CD4-positive, alpha-beta T cell (primary cell): ENCODE measurements at regions of chr12 and their contacts with region 1.

Region 1: DNA sequence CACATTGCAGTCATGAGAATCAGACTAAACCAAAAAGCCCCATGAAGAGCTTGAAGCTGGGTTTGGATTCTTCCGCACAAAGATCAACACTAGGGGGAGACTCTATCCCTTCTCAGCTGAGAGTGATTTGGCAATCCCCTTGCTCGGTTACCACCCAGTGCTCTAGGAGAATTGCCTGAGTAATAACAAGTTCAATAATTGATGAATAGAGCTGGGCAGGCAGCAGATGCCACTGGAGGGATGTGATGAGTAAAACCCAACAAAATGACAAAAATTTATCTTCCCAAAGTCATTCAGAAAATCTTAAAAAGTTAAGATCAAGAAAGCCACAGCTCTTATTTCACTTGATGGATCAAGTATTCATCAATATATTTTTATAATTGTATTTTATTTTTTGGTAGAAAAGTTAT is 185.6 kb upstream of the ARID2 start:
- DNase-seq: peak in 12 of 14 experiments; percentile 3 to 83 (median 20)
- ATAC-seq: peak; percentile 87
- H3K4me3 ChIP-seq: no peak overlapping the region
- H3K4me3 Mint-ChIP-seq: no peak overlapping the region
- H3K27ac ChIP-seq: no peak overlapping the region
- H3K27ac Mint-ChIP-seq: no peak overlapping the region
- H3K4me1 ChIP-seq: no peaks in the 10 kb centered on the region
- H3K4me1 Mint-ChIP-seq: no peaks in the 10 kb centered on the region
- H3K27me3 ChIP-seq: no peaks in the 10 kb centered on the region
- H3K27me3 Mint-ChIP-seq: no peaks in the 10 kb centered on the region
- CTCF ChIP-seq: peak; percentile 83

Region 2: DNA sequence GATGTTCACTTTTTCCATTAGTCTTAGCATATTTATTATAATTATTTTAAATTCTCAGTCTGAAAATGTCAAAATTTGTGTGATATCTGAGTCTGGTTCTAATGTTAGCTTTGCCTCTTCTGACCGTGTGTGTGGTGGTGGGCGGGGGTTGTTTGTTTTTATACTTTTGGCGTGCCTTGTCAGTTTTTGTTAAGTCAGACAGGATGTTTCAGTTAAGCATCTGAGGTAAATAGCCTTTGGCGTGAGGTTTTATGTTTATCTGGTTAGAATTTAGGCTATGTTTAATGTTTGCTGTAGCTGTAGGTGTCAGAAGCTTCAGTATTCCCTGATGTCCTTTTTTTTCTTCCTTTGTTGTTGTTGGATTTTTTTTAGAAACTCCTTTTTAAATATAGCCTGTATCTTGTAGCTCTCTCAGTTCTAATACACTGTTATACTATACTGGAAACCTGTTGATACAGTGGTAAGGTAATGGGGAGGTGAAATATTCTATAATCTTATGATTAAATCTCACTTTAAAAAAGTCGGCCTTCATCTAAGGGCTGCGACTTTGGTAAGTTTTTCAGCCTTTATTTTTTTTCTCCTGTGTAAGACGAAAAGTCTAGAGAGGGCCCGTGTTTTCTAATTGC is 334.8 kb after region 1 on chr12:
- CTCF ChIA-PET with region 1: no interaction called
- POLR2A ChIA-PET with region 1: no interaction called
- intact Hi-C with region 1: loop called in 1 of 2 experiments (anchors 10 kb)
- DNase-seq: peak in 8 of 14 experiments; percentile 4 to 73 (median 30)
- ATAC-seq: peak; percentile 59
- H3K4me3 ChIP-seq: no peak overlapping the region
- H3K4me3 Mint-ChIP-seq: peak overlapping the region; percentile 51
- H3K27ac ChIP-seq: peak overlapping the region in 1 of 2 donors; percentile 59
- H3K27ac Mint-ChIP-seq: peak overlapping the region; percentile 76
- H3K4me1 ChIP-seq: peaks cover 5% of the 10 kb centered on the region
- H3K4me1 Mint-ChIP-seq: peaks cover 31% of the 10 kb centered on the region
- H3K27me3 ChIP-seq: no peaks in the 10 kb centered on the region
- H3K27me3 Mint-ChIP-seq: no peaks in the 10 kb centered on the region
- CTCF ChIP-seq: no peak

Region 3: GRCh38 chr12:46005151-46005797 is 461.4 kb after region 1 on chr12:
- CTCF ChIA-PET with region 1: no interaction called
- POLR2A ChIA-PET with region 1: no interaction called
- intact Hi-C with region 1: loop called in 1 of 2 experiments (anchors 5 kb)
- DNase-seq: peak in 3 of 14 experiments; percentile 36 to 40 (median 38)
- ATAC-seq: no peak
- H3K4me3 ChIP-seq: no peak overlapping the region
- H3K4me3 Mint-ChIP-seq: no peak overlapping the region
- H3K27ac ChIP-seq: no peak overlapping the region
- H3K27ac Mint-ChIP-seq: no peak overlapping the region
- H3K4me1 ChIP-seq: no peaks in the 10 kb centered on the region
- H3K4me1 Mint-ChIP-seq: no peaks in the 10 kb centered on the region
- H3K27me3 ChIP-seq: no peaks in the 10 kb centered on the region
- H3K27me3 Mint-ChIP-seq: no peaks in the 10 kb centered on the region
- CTCF ChIP-seq: peak; percentile 45